IMR-90 (cell line): ENCODE measurements at regions of chr3 and their contacts with region 1.

Region 1: GRCh38 chr3:152159328-152159727 is 109.4 kb upstream of the MBNL1 start:
- DNase-seq: peak; percentile 94
- ATAC-seq: peak; percentile 97
- H3K4me3 ChIP-seq: no peak overlapping the region
- H3K27ac ChIP-seq: no peak overlapping the region
- H3K4me1 ChIP-seq: peaks cover 2% of the 10 kb centered on the region; the same call in 1 of the 2 replicates
- H3K27me3 ChIP-seq: no peaks in the 10 kb centered on the region
- CTCF ChIP-seq: no peak
- POLR2A ChIP-seq: no peak
- RAD21 ChIP-seq: no peak

Region 2: DNA sequence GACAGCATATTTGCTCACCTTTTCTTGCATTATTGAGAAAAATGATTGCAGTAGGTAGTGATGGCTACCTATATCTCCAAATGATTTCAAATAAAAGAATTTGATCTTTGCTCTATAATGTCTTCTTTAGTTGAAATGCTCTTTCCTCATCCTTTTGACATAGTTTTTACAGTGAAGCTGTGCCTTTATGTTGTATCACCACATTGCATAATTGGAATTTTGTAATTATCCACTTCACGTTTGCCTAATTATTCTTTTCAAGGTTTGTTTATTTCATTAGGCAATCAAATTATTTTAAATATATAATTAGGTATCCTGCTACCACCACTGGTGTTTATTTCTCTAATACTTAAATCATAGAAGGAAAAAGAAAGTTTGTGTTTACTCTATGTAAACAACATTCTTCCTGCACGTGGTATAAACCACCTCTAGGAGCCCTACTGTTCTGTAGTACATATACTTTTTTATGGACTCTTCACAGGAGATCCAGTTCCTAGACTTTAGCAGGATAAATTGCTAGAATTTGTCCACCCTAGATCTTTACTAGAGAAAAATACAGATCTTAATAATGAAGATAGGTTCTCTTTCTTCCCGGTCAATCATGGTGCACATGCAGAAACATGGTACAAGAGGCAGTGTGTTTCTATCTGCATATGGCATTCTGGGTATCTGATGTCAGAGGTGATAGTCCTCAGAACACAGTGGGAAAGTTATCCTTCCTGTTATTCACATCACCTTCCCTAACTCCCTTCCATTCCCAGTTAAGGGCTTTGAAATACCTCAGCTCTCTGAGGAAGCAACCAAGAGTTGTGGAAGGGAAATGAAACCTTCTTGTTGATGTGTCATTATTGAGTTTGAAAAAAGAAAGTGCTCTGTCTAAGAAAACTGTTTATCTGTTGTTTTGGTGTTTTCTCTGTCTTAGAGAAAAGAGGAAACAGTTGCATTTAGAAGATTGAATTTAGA is 808.4 kb before region 1 on chr3:
- CTCF ChIA-PET with region 1: no interaction called
- POLR2A ChIA-PET with region 1: no interaction called
- dilution Hi-C with region 1: no loop called
- in situ Hi-C with region 1: no loop called
- intact Hi-C with region 1: no loop called
- DNase-seq: no peak
- ATAC-seq: peak; percentile 72
- H3K4me3 ChIP-seq: no peak overlapping the region
- H3K27ac ChIP-seq: no peak overlapping the region
- H3K4me1 ChIP-seq: peaks cover 3% of the 10 kb centered on the region; the same call in 1 of the 2 replicates
- H3K27me3 ChIP-seq: no peaks in the 10 kb centered on the region
- CTCF ChIP-seq: no peak
- POLR2A ChIP-seq: no peak
- RAD21 ChIP-seq: no peak

Region 3: DNA sequence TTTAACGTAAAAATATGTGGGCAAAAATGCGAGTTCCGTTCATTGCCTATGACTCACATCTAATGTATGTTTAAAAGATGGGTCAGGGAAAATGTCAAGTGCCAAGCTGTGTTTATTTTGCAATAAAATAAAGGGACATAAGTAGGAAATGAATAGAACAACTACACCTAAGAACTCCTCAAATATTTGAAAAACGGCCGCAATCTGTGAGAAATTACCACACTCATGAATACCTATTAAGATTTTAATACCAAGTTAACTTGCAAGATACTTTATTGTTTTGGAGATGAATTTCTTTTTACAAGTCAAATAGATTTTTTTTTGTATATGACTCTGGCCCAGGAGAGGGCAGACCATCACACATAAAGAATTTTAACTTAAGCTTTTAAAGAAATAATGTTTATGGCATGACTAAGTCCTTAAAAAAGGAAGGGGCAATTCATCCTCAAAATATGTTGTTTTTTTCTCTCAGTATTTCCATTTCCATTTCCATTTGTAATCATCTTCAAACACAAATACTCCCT is 133.2 kb before region 1 on chr3:
- CTCF ChIA-PET with region 1: no interaction called
- POLR2A ChIA-PET with region 1: no interaction called
- dilution Hi-C with region 1: no loop called
- in situ Hi-C with region 1: no loop called
- intact Hi-C with region 1: loop called (anchors 5 kb)
- DNase-seq: peak; percentile 89
- ATAC-seq: peak; percentile 89
- H3K4me3 ChIP-seq: no peak overlapping the region
- H3K27ac ChIP-seq: peak overlapping the region; percentile 80; the same call in 1 of the 2 replicates
- H3K4me1 ChIP-seq: no peaks in the 10 kb centered on the region
- H3K27me3 ChIP-seq: no peaks in the 10 kb centered on the region
- CTCF ChIP-seq: peak; percentile 63
- POLR2A ChIP-seq: no peak
- RAD21 ChIP-seq: peak; percentile 62

Region 4: DNA sequence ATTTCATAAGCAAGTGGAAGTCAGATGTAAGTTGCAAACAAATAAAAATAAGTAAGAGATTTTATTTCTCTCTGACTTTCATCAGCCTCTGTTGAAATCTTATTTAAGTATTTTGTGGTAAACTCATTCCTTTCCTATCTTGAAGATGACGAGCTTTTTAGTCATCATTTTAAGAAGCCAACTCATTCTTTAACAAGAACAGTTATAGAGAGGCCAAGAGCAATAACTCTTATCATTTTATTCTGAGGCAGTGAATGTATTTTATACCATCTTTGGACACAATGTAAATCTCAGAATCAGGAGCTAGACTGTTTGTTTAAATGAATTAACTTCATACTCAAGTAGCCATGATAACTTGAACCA is 38.1 kb before region 1 on chr3:
- CTCF ChIA-PET with region 1: no interaction called
- POLR2A ChIA-PET with region 1: interaction called, 11 read pairs
- dilution Hi-C with region 1: no loop called
- in situ Hi-C with region 1: no loop called
- intact Hi-C with region 1: loop called (anchors 1 kb)
- DNase-seq: peak; percentile 95
- ATAC-seq: peak; percentile 77
- H3K4me3 ChIP-seq: no peak overlapping the region; the same call in 1 of the 2 replicates
- H3K27ac ChIP-seq: peak overlapping the region; percentile 88
- H3K4me1 ChIP-seq: peaks cover 10% of the 10 kb centered on the region; the same call in 1 of the 2 replicates
- H3K27me3 ChIP-seq: no peaks in the 10 kb centered on the region
- CTCF ChIP-seq: no peak
- POLR2A ChIP-seq: no peak
- RAD21 ChIP-seq: no peak